Psoas muscle (tissue), 8 donors: ENCODE measurements at regions of chr4 and their contacts with region 1.

Region 1: GRCh38 chr4:22389240-22389870 is 126.5 kb downstream of the ADGRA3 start:
- DNase-seq: peak in 1 of 2 donors; percentile 50
- ATAC-seq: peak in 3 of 4 donors; percentile 58 to 64 (median 63)
- H3K4me3 ChIP-seq: no peak overlapping the region
- H3K27ac ChIP-seq: no peak overlapping the region
- H3K4me1 ChIP-seq: peaks cover 14% of the 10 kb centered on the region
- H3K27me3 ChIP-seq: no peaks in the 10 kb centered on the region
- CTCF ChIP-seq: peak; percentile 69

Region 2: DNA sequence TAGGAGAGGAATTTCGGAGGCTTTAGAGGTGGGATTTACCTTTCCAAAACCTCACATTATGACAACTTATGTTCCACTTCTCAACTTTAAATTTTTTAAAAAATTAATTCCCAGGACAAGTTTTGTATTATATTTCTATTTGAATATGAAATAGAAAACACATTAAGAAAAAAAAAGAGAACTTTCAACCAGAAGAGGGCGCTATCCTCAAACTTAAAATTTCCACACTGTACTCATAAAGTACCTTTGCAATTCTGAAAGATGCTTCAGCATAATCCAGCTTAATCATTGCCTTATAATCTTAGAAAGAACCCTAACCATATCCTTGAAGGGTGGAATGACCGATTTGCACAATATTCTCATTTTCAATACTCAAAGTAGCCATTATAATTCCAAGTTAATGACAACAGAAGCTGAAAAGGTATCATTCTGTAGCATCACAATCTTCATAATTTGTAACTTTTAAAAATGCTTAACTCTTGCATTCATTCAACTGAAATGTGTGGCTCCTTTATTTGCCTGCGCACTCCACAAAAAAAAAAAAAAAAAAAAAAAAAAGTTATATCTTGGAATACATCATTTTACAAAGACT is 598.8 kb before region 1 on chr4:
- intact Hi-C with region 1: loop called (anchors 5 kb)
- DNase-seq: no peak
- ATAC-seq: no peak
- H3K4me3 ChIP-seq: no peak overlapping the region
- H3K27ac ChIP-seq: no peak overlapping the region
- H3K4me1 ChIP-seq: no peaks in the 10 kb centered on the region
- H3K27me3 ChIP-seq: no peaks in the 10 kb centered on the region
- CTCF ChIP-seq: peak; percentile 36

Region 3: DNA sequence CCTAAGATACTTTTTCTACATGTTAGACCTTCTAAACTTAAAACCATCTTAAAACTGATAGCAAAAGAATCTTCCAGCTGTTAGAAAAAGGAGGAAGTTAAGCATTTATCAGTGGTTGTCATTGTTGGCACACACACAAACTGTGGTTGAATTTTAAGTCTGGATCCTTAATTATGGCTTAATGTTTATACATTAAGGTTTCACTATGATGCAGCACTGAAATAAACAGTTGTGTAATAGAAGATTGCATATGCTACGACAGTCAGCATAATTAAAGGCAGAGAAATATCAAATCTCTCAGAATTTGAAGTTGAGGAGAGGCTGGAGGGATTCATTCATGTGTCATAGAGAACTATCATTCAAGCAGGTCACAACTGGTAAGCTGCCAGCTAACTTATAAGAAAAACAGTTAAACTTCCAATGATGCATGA is 94.2 kb after region 1 on chr4:
- intact Hi-C with region 1: no loop called
- DNase-seq: no peak
- ATAC-seq: no peak
- H3K4me3 ChIP-seq: no peak overlapping the region
- H3K27ac ChIP-seq: no peak overlapping the region
- H3K4me1 ChIP-seq: peaks cover 53% of the 10 kb centered on the region
- H3K27me3 ChIP-seq: no peaks in the 10 kb centered on the region
- CTCF ChIP-seq: no peak

Region 4: GRCh38 chr4:22539251-22539650 is 149.9 kb after region 1 on chr4:
- intact Hi-C with region 1: no loop called
- DNase-seq: no peak
- ATAC-seq: no peak
- H3K4me3 ChIP-seq: no peak overlapping the region
- H3K27ac ChIP-seq: no peak overlapping the region
- H3K4me1 ChIP-seq: no peaks in the 10 kb centered on the region
- H3K27me3 ChIP-seq: no peaks in the 10 kb centered on the region
- CTCF ChIP-seq: no peak